K562 (cell line): ENCODE measurements at regions of chr1 and their contacts with region 1.

Region 1: GRCh38 chr1:185044981-185045813 is at the start of gene RNF2:
- DNase-seq: peak; percentile 92 to 94 (median 94)
- ATAC-seq: peak; percentile 94
- H3K4me3 ChIP-seq: peak within 1 kb of the TSS; percentile 85
- H3K27ac ChIP-seq: peak within 1 kb of the TSS; percentile 85
- H3K4me1 ChIP-seq: peaks cover 21 to 25% of the 10 kb centered on the region in 2 experiments
- H3K27me3 ChIP-seq: no peaks in the 10 kb centered on the region
- CTCF ChIP-seq: peak in 1 of 3 experiments; percentile 40; a peak in 1 of 6 replicates
- EP300 ChIP-seq: no peak
- POLR2A ChIP-seq: peak; percentile 79
- RAD21 ChIP-seq: peak in 1 of 2 experiments; percentile 45; a peak in 3 of 4 replicates
- polyA plus RNA-seq, gene RNF2: 7.1 to 7.9 TPM

Region 2: GRCh38 chr1:185063719-185064118 is 18.5 kb after region 1 on chr1:
- CTCF ChIA-PET with region 1: no interaction called
- POLR2A ChIA-PET with region 1: interaction called, 19 read pairs
- in situ Hi-C with region 1: no loop called
- intact Hi-C with region 1: no loop called
- DNase-seq: no peak
- ATAC-seq: no peak
- H3K4me3 ChIP-seq: no peak overlapping the region
- H3K27ac ChIP-seq: no peak overlapping the region
- H3K4me1 ChIP-seq: peaks cover 0 to 4% of the 10 kb centered on the region in 2 experiments; a peak in 3 of 5 replicates
- H3K27me3 ChIP-seq: no peaks in the 10 kb centered on the region
- CTCF ChIP-seq: no peak
- EP300 ChIP-seq: no peak
- POLR2A ChIP-seq: no peak
- RAD21 ChIP-seq: no peak

Region 3: DNA sequence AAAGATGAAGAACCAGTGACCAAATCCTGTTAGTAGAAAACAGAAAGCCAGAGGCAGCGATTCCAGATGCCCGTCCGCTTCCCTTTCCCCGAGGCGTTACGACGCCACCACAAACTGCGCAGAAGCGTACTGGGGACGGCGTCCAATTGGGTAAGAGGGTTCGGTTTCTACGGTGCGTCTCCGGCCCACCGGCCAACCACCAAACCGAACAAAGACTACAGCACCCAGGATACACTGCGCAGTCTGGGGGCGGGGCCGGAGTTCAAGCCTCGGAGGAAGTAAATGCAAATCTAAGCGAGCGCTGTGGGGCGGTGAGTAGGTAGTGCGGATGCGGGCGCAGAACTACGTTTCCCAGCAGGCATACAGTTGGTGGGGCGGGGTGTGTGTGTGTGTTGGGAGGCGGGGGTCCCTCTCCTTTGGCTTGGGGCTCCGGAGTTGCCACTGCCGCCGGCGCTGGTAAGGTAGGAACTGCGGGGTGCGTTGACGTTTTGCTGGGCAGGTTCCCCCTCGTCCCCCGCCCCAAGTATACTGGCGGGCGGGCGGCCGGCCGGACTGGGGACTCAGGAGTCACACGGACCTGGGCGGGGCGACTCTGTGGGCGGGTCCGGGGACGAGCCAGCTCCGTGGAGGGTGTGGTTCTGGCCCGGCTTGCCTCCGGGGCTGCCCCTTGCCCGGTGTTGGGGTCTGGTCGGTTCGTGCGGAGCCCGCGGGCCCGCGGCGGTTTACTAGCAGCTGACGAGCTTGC is 111.8 kb after region 1 on chr1 and contains the starts of genes SWT1 and TRMT1L:
- CTCF ChIA-PET with region 1: no interaction called
- POLR2A ChIA-PET with region 1: interaction called, 4 read pairs
- in situ Hi-C with region 1: no loop called
- intact Hi-C with region 1: loop called (anchors 1 kb)
- DNase-seq: peak; percentile 91 to 100 (median 93)
- ATAC-seq: peak; percentile 91
- H3K4me3 ChIP-seq: peak within 1 kb of the TSS; percentile 87
- H3K27ac ChIP-seq: peak within 1 kb of the TSS; percentile 88
- H3K4me1 ChIP-seq: peaks cover 10 to 23% of the 10 kb centered on the region in 2 experiments; a peak in 3 of 5 replicates
- H3K27me3 ChIP-seq: no peaks in the 10 kb centered on the region
- CTCF ChIP-seq: no peak
- EP300 ChIP-seq: no peak
- POLR2A ChIP-seq: peak; percentile 96
- RAD21 ChIP-seq: no peak
- polyA plus RNA-seq, gene SWT1: 1.5 to 2.3 TPM
- polyA plus RNA-seq, gene TRMT1L: 6.4 to 7.9 TPM